Ovary (tissue), 10 donors: ENCODE measurements at regions of chr4 and their contacts with region 1.

Region 1: GRCh38 chr4:147590249-147590920 is 26.8 kb upstream of the TMEM184C start:
- DNase-seq: peak; percentile 66 to 80 (median 78)
- H3K4me3 ChIP-seq: no peak overlapping the region
- H3K27ac ChIP-seq: peak overlapping the region in 1 of 2 donors; percentile 13
- H3K4me1 ChIP-seq: peaks cover 3% of the 10 kb centered on the region
- H3K27me3 ChIP-seq: no peaks in the 10 kb centered on the region
- CTCF ChIP-seq: peak; percentile 64 to 95 (median 84)
- EP300 ChIP-seq: no peak
- POLR2A ChIP-seq: no peak

Region 2: DNA sequence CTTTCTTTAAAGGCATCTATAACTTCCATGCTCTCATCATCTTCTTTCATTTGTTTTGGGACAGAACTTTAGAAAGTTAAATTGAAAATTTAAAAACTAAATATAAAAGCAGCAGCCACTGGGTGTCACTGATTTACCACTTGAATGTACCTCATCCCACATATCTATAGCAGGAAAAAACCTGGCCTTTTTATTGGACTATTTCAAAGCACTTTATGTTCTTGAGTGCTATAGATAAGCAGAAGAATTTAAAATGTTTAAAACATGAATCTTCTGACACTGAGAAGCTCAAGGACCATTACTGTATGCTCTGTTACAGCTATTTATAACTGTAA is 479.4 kb before region 1 on chr4:
- intact Hi-C with region 1: loop called in 2 of 4 experiments (anchors 5 kb)
- DNase-seq: no peak
- H3K4me3 ChIP-seq: no peak overlapping the region
- H3K27ac ChIP-seq: no peak overlapping the region
- H3K4me1 ChIP-seq: no peaks in the 10 kb centered on the region
- H3K27me3 ChIP-seq: no peaks in the 10 kb centered on the region
- CTCF ChIP-seq: peak; percentile 39 to 61 (median 51)
- EP300 ChIP-seq: no peak
- POLR2A ChIP-seq: no peak

Region 3: DNA sequence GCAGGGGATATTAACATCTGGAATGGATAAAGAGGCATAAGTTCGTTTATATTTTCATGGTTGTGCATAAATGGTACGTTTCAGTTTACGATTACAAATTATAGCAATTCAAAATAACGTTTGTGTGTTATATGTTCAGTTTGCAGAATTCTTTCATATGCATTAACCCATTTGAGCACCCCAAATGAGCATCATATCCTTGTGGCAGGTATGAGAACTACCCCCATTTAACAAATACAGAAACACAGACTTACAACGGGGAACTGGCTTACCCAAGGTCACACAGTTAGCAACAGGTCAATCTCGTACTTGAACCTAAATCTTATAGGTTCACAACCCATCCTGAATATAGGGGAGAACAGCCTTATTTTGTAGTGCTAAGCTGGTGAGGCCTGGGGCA is 76.4 kb before region 1 on chr4:
- intact Hi-C with region 1: loop called in 1 of 4 experiments (anchors 2 kb)
- DNase-seq: no peak
- H3K4me3 ChIP-seq: no peak overlapping the region
- H3K27ac ChIP-seq: no peak overlapping the region
- H3K4me1 ChIP-seq: no peaks in the 10 kb centered on the region
- H3K27me3 ChIP-seq: no peaks in the 10 kb centered on the region
- CTCF ChIP-seq: no peak
- EP300 ChIP-seq: no peak
- POLR2A ChIP-seq: no peak

Region 4: GRCh38 chr4:147736458-147736857 is 146.1 kb after region 1 on chr4:
- intact Hi-C with region 1: no loop called
- DNase-seq: no peak
- H3K4me3 ChIP-seq: no peak overlapping the region
- H3K27ac ChIP-seq: peak overlapping the region in 1 of 2 donors; percentile 97
- H3K4me1 ChIP-seq: peaks cover 18% of the 10 kb centered on the region
- H3K27me3 ChIP-seq: no peaks in the 10 kb centered on the region
- CTCF ChIP-seq: no peak
- EP300 ChIP-seq: no peak
- POLR2A ChIP-seq: no peak